ENCODE measurements at regions of chr5 and their contacts with region 1.

Region 1: DNA sequence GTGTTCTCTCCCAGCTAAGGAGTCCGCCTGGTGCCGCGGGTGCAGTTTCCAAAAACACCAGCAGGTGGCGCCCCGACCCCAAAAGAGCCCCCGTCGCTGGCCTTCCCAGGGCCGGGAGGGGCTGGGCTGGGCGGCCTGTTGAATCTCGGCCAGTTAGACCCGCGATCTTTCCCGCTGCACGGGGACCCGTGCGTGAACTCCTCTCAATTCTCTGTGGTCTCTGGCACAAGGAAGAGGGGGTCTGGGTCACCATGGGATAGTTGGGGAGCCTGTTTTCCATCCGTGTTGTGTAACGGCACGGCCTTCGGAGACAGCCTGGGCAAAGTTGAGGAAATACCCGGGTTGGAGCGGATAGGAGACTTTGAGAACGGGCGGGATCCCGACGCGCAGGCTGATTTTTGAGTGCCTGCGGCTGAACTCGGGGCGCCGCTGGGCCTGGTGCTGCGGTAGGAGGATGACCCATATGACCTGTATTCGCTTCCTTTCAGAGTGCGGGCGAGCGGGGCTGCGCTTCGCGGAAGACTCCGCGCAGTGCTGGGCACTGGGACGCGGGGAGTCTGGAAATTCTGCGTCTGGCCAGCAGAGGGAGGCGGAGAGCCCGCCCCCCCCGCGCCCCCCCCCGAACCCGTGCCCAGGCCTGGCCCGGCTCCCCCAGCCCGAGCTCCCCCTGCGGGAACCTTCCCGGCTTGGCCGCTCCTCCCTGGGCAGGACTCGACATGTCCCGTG is 7.9 kb upstream of the PSD2 start:
- DNase-seq: peak; percentile 82
- H3K4me3 ChIP-seq: peak overlapping the region; percentile 61 to 87 (median 83)
- H3K27ac ChIP-seq: no peak overlapping the region
- H3K4me1 ChIP-seq: peaks cover 3% of the 10 kb centered on the region
- H3K27me3 ChIP-seq: peaks cover 2% of the 10 kb centered on the region in 2 experiments
- CTCF ChIP-seq: peak; percentile 93 to 98
- POLR2A ChIP-seq: no peak

Region 2: GRCh38 chr5:139808493-139809139 is 20.9 kb after region 1 on chr5:
- CTCF ChIA-PET with region 1: interaction called, 27 read pairs
- POLR2A ChIA-PET with region 1: no interaction called
- dilution Hi-C with region 1: no loop called
- intact Hi-C with region 1: no loop called
- DNase-seq: peak; percentile 13
- H3K4me3 ChIP-seq: no peak overlapping the region
- H3K27ac ChIP-seq: no peak overlapping the region
- H3K4me1 ChIP-seq: no peaks in the 10 kb centered on the region
- H3K27me3 ChIP-seq: no peaks in the 10 kb centered on the region
- CTCF ChIP-seq: no peak
- POLR2A ChIP-seq: no peak

Region 3: DNA sequence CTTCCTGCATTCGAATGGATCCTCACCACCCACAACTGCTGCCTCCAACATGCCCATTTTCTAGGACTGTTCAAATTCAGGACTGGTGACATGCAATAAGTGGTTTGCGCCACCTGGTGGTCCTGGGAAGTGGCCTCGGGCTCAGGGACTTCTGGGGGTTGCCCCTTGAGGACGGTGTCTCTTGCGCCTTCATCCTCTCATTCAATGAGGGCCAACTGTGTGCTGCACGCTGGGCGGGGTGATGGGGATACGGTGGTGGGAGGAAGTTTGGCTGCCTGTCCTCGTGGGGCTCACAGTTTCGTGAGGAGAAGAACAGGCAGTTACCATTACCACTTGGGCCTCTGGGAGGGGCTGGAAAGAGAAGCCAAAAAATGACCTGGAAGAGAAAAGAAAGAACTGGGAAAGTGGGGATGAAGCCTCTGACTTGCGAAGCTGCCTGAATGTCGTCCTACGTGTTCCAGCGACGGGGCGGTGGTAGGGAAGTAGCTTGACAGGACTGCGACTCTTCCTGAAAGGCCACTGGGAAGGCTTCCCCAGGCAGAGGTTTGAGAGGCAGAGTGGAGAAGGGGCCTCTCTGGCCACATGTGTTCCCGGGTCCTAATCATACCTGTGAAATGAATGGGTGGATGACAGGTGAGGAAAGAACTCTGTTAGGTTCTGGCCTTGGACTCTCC is 56.9 kb after region 1 on chr5:
- CTCF ChIA-PET with region 1: interaction called, 95 read pairs
- POLR2A ChIA-PET with region 1: no interaction called
- dilution Hi-C with region 1: no loop called
- intact Hi-C with region 1: loop called (anchors 1 kb)
- DNase-seq: peak; percentile 62
- H3K4me3 ChIP-seq: no peak overlapping the region
- H3K27ac ChIP-seq: no peak overlapping the region
- H3K4me1 ChIP-seq: no peaks in the 10 kb centered on the region
- H3K27me3 ChIP-seq: peaks cover 4 to 7% of the 10 kb centered on the region in 2 experiments
- CTCF ChIP-seq: peak; percentile 83 to 94
- POLR2A ChIP-seq: no peak

Region 4: DNA sequence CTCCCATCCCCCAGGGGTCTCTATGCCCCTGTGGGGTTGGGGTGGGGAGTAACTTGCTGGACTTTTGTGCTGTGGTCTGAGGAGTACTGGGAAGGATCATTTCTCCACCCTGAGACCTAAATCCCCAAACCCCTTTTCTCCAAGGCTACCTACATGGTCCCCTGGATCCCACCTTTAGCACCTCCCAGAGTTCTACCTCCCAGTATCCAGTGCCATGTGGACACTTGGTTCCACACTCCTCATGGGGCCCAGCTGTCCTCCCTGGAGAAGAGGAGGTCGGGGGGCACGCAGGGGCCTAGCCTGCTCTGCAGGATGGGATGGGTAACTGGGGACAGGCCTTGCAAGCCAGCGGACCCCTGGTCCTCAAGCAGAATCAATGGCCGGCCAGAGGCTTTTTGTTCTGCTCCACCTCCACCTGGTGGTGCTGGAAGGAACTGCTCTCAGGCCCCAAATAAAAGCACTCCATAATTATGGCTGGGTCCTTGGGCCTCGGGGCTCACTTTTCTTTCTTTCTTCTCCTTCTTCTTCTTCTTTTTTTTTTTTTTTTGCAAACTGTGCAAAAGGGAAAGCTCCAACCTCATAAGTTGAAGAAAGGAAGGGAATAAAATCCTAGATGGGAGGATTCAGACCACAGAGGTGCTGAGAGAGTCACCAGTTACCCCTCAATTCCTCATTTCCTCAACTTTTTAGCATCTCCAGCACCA is 76.3 kb after region 1 on chr5:
- CTCF ChIA-PET with region 1: interaction called, 95 read pairs
- POLR2A ChIA-PET with region 1: no interaction called
- dilution Hi-C with region 1: no loop called
- intact Hi-C with region 1: loop called (anchors 1 kb)
- DNase-seq: peak; percentile 57
- H3K4me3 ChIP-seq: no peak overlapping the region
- H3K27ac ChIP-seq: no peak overlapping the region
- H3K4me1 ChIP-seq: no peaks in the 10 kb centered on the region
- H3K27me3 ChIP-seq: peaks cover 6 to 12% of the 10 kb centered on the region in 2 experiments
- CTCF ChIP-seq: peak; percentile 75 to 88
- POLR2A ChIP-seq: no peak

Region 5: DNA sequence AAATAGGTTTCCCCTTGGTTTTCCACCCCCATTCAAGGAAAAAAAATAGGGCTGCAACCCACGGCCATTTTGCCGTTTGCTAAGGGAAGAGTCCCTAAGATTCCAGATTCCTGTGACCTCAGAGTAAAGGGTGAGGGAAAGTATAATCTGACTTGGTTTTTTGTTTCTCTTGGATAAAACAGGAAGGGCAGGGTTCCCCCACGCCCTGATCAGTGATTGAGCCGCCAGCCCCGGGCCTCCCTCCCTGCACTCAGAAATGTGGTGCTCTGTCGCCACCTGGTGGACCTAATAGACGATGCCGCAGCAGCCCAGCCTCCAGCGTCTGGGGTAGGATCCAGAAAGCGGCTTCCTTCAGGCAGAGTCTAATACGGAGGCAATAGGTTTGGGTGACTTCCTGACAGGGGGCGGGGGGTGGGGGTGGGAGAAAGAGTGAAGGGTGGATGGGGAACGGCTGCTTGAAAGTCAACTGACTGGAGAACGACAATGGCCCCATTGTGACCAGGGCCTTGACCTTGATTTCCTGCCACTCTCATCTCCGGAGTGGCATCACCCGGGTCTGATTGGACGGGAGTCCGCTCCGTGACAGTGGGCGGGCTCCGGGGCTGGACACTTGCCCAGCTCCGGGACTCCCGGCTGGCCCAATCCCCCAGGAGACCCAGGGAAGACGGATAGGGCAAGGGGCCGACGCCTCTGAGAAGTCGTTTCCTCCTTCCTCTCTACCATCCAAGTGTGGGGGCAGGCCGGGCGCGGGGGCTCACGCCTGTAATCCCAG is 369.5 kb after region 1 on chr5:
- CTCF ChIA-PET with region 1: interaction called, 41 read pairs
- POLR2A ChIA-PET with region 1: no interaction called
- dilution Hi-C with region 1: no loop called
- intact Hi-C with region 1: loop called (anchors 1 kb)
- DNase-seq: peak; percentile 75
- H3K4me3 ChIP-seq: peak overlapping the region in 2 of 3 experiments; percentile 19 to 24
- H3K27ac ChIP-seq: no peak overlapping the region
- H3K4me1 ChIP-seq: peaks cover 4% of the 10 kb centered on the region
- H3K27me3 ChIP-seq: no peaks in the 10 kb centered on the region
- CTCF ChIP-seq: peak; percentile 81 to 86
- POLR2A ChIP-seq: no peak